ENCODE measurements at regions of chr2 and their contacts with region 1.

Region 1: GRCh38 chr2:241355983-241356870 is at the start of gene FARP2:
- DNase-seq: peak; percentile 90
- ATAC-seq: peak; percentile 86
- H3K4me3 ChIP-seq: peak within 1 kb of the TSS; percentile 91
- H3K27ac ChIP-seq: peak within 1 kb of the TSS; percentile 64
- H3K4me1 ChIP-seq: peaks cover 10% of the 10 kb centered on the region
- H3K27me3 ChIP-seq: no peaks in the 10 kb centered on the region
- CTCF ChIP-seq: no peak
- EP300 ChIP-seq: no peak
- POLR2A ChIP-seq: peak; percentile 97
- RAD21 ChIP-seq: 0 out of 2 replicates have a peak, but pooled peaks have one; percentile 10
- polyA plus RNA-seq, gene FARP2: 5.5 to 5.6 TPM

Region 2: GRCh38 chr2:241279413-241279812 is 76.8 kb before region 1 on chr2:
- CTCF ChIA-PET with region 1: no interaction called
- POLR2A ChIA-PET with region 1: no interaction called
- RAD21 ChIA-PET with region 1: no interaction called
- SMC1A ChIA-PET with region 1: no interaction called
- in situ Hi-C with region 1: no loop called
- intact Hi-C with region 1: no loop called
- DNase-seq: no peak
- ATAC-seq: no peak
- H3K4me3 ChIP-seq: no peak overlapping the region
- H3K27ac ChIP-seq: no peak overlapping the region; the same call in 1 of the 2 replicates
- H3K4me1 ChIP-seq: peaks cover 12% of the 10 kb centered on the region
- H3K27me3 ChIP-seq: no peaks in the 10 kb centered on the region
- CTCF ChIP-seq: no peak
- EP300 ChIP-seq: no peak
- POLR2A ChIP-seq: no peak
- RAD21 ChIP-seq: no peak

Region 3: DNA sequence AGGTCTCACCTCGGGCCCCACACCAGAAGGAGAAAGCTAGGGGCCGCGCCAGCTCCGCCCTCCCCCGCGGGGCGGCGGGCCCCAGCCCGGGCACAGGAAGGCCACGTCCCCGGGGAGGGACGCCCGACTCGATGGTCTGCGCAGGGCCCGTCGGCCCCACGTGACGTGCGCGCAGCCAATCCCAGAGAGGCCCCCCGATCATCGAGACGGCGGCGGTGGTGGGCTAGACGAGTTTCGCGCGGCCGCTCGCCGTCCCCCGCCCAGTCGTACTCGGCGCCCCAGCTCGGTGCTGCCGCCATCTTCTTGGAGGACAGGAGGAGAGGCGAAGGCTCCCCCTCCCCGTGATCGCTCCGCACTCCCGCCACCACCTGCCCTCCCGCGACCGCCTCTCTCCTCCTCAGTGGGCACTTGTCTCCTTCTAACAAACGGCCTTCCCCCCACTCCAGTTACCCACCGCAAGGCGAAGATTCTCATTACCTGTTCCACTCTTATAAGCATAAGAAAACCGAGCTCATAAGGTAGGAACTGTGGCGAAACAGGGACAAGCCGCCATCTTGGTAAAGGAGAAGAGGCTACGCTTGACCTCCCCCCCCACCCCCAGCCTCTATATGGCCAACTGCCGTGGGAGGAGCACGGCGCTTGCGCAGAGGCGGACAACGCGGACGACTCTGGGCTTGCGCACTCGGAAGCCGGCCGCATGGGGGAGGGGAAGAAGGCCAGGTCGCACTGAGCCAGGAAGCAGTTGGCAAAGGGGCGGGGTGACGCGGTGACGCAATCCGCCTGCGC is 40.9 kb before region 1 on chr2 and contains the start of gene HDLBP:
- CTCF ChIA-PET with region 1: interaction called, 13 read pairs
- POLR2A ChIA-PET with region 1: interaction called, 23 read pairs
- RAD21 ChIA-PET with region 1: interaction called, 15 read pairs
- SMC1A ChIA-PET with region 1: interaction called, 13 read pairs
- in situ Hi-C with region 1: no loop called
- intact Hi-C with region 1: loop called (anchors 1 kb)
- DNase-seq: peak; percentile 96
- ATAC-seq: peak; percentile 80
- H3K4me3 ChIP-seq: peak within 1 kb of the TSS; percentile 90
- H3K27ac ChIP-seq: peak within 1 kb of the TSS; percentile 95
- H3K4me1 ChIP-seq: peaks cover 17% of the 10 kb centered on the region
- H3K27me3 ChIP-seq: no peaks in the 10 kb centered on the region
- CTCF ChIP-seq: peak; percentile 12 to 39 (median 25); a peak in 4 of 6 replicates
- EP300 ChIP-seq: peak; percentile 28 to 30; a peak in 2 of 4 replicates
- POLR2A ChIP-seq: peak; percentile 84
- RAD21 ChIP-seq: 0 out of 2 replicates have a peak, but pooled peaks have one; percentile 4
- polyA plus RNA-seq, gene HDLBP: 19.5 to 56.8 TPM

Region 4: GRCh38 chr2:241372361-241372992 is 16.2 kb after region 1 on chr2:
- CTCF ChIA-PET with region 1: interaction called, 57 read pairs
- POLR2A ChIA-PET with region 1: interaction called, 58 read pairs
- RAD21 ChIA-PET with region 1: interaction called, 98 read pairs
- SMC1A ChIA-PET with region 1: interaction called, 239 read pairs
- in situ Hi-C with region 1: no loop called
- intact Hi-C with region 1: loop called (anchors 1 kb)
- DNase-seq: no peak
- ATAC-seq: no peak
- H3K4me3 ChIP-seq: no peak overlapping the region
- H3K27ac ChIP-seq: no peak overlapping the region; the same call in 1 of the 2 replicates
- H3K4me1 ChIP-seq: peaks cover 43% of the 10 kb centered on the region
- H3K27me3 ChIP-seq: no peaks in the 10 kb centered on the region
- CTCF ChIP-seq: no peak
- EP300 ChIP-seq: no peak
- POLR2A ChIP-seq: no peak
- RAD21 ChIP-seq: no peak

Region 5: DNA sequence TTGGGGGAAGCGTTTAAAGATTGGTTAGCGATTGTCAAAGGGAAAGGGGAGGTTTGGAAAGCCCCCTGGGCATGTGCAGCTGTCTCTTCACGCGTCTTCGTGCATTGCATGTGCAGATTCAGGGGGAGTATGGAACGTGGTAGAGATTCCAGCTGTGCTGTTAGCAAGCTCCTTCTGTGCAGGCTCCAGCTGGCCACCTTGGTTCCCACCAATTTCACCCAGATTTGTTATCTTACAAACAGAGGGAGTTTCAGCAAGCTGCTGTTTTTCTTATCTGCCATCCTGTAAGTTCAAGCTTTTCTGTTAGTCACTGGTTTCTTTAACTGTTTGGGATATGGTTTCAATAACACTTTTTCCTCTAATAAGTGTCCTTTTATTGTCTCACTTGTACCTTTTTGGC is 30.3 kb after region 1 on chr2:
- CTCF ChIA-PET with region 1: interaction called, 88 read pairs
- POLR2A ChIA-PET with region 1: interaction called, 41 read pairs
- RAD21 ChIA-PET with region 1: interaction called, 75 read pairs
- SMC1A ChIA-PET with region 1: interaction called, 176 read pairs
- in situ Hi-C with region 1: no loop called
- intact Hi-C with region 1: no loop called
- DNase-seq: no peak
- ATAC-seq: no peak
- H3K4me3 ChIP-seq: no peak overlapping the region
- H3K27ac ChIP-seq: no peak overlapping the region
- H3K4me1 ChIP-seq: peaks cover 18% of the 10 kb centered on the region
- H3K27me3 ChIP-seq: no peaks in the 10 kb centered on the region
- CTCF ChIP-seq: no peak
- EP300 ChIP-seq: no peak
- POLR2A ChIP-seq: no peak
- RAD21 ChIP-seq: no peak

Region 6: GRCh38 chr2:241609859-241610793 is 253.9 kb after region 1 on chr2:
- CTCF ChIA-PET with region 1: interaction called, 3 read pairs
- POLR2A ChIA-PET with region 1: no interaction called
- RAD21 ChIA-PET with region 1: interaction called, 3 read pairs
- SMC1A ChIA-PET with region 1: no interaction called
- in situ Hi-C with region 1: no loop called
- intact Hi-C with region 1: loop called (anchors 10 kb)
- DNase-seq: peak; percentile 40
- ATAC-seq: peak; percentile 100
- H3K4me3 ChIP-seq: peak overlapping the region; percentile 75
- H3K27ac ChIP-seq: peak overlapping the region; percentile 43; the same call in 1 of the 2 replicates
- H3K4me1 ChIP-seq: no peaks in the 10 kb centered on the region
- H3K27me3 ChIP-seq: no peaks in the 10 kb centered on the region
- CTCF ChIP-seq: peak; percentile 71 to 84 (median 75); a peak in 5 of 6 replicates
- EP300 ChIP-seq: no peak
- POLR2A ChIP-seq: no peak; the same call in 1 of the 2 replicates
- RAD21 ChIP-seq: peak; percentile 76

Measured in GM12878 (cell line).